ENCODE measurements at regions of chr1 and their contacts with region 1.

Region 1: DNA sequence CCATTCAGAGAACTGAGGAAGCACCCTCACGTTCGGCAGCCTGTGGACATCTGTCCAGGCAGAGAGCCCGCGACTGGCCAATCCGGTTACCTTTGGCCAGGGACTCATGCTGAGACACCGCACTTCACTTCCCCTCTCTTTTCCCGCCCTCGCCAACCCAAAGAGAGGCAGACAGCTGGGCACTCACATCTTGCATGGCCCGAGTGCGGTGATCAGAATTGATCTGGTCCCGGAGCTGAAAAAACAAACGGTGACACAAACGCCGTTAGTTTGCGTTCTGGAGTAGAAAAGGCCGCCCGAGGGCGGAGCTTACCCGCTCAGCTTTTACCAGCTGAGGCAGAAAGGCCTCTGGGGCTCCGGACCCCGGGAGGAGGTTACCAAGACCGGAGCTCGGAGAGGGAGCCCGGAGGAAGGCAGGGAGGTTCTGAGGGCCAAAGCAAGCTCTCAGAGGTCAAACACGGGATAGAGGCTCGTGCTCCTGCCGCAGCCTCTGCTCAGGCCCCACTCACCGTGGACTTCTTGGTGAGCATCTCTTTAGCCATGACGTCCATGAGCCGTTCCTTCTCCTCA is 376 bp downstream of the SF3A3 start:
- DNase-seq: peak in 2 of 9 donors; percentile 46 to 47
- ATAC-seq: peak; percentile 33
- H3K4me3 ChIP-seq: peak overlapping the region; percentile 97
- H3K4me3 Mint-ChIP-seq: peak overlapping the region; percentile 89 to 100 (median 99)
- H3K27ac ChIP-seq: peak overlapping the region; percentile 79
- H3K27ac Mint-ChIP-seq: peak overlapping the region; percentile 87 to 99 (median 91)
- H3K4me1 ChIP-seq: peaks cover 13 to 17% of the 10 kb centered on the region in 2 donors
- H3K4me1 Mint-ChIP-seq: peaks cover 16 to 30% (median 24%) of the 10 kb centered on the region in 7 donors
- H3K27me3 ChIP-seq: no peaks in the 10 kb centered on the region
- H3K27me3 Mint-ChIP-seq: no peaks in the 10 kb centered on the region

Region 2: GRCh38 chr1:37859507-37860345 is 129.7 kb before region 1 on chr1 and contains the start of gene MTF1:
- CTCF ChIA-PET with region 1: interaction called, 4 read pairs
- POLR2A ChIA-PET with region 1: no interaction called
- intact Hi-C with region 1: loop called (anchors 1 to 5 kb)
- DNase-seq: peak; percentile 85 to 98 (median 97)
- ATAC-seq: peak; percentile 99
- H3K4me3 ChIP-seq: peak within 1 kb of the TSS; percentile 94
- H3K4me3 Mint-ChIP-seq: peak within 1 kb of the TSS; percentile 89 to 100 (median 96)
- H3K27ac ChIP-seq: peak within 1 kb of the TSS; percentile 89
- H3K27ac Mint-ChIP-seq: peak within 1 kb of the TSS; percentile 90 to 99 (median 95)
- H3K4me1 ChIP-seq: peaks cover 12 to 19% of the 10 kb centered on the region in 2 donors
- H3K4me1 Mint-ChIP-seq: peaks cover 26 to 39% (median 33%) of the 10 kb centered on the region in 7 donors
- H3K27me3 ChIP-seq: no peaks in the 10 kb centered on the region
- H3K27me3 Mint-ChIP-seq: no peaks in the 10 kb centered on the region
- total RNA-seq, gene MTF1: 22.9 to 45.2 (median 27.1) TPM

Region 3: GRCh38 chr1:37931361-37932158 is 57.9 kb before region 1 on chr1:
- CTCF ChIA-PET with region 1: interaction called, 14 read pairs
- POLR2A ChIA-PET with region 1: interaction called, 4 read pairs
- intact Hi-C with region 1: loop called (anchors 1 kb)
- DNase-seq: peak; percentile 92 to 97 (median 96)
- ATAC-seq: peak; percentile 100
- H3K4me3 ChIP-seq: peak overlapping the region; percentile 67
- H3K4me3 Mint-ChIP-seq: peak overlapping the region; percentile 89 to 99 (median 98)
- H3K27ac ChIP-seq: peak overlapping the region; percentile 79
- H3K27ac Mint-ChIP-seq: peak overlapping the region; percentile 78 to 94 (median 87)
- H3K4me1 ChIP-seq: peaks cover 15 to 17% of the 10 kb centered on the region in 2 donors
- H3K4me1 Mint-ChIP-seq: peaks cover 22 to 52% (median 39%) of the 10 kb centered on the region in 7 donors
- H3K27me3 ChIP-seq: no peaks in the 10 kb centered on the region
- H3K27me3 Mint-ChIP-seq: peaks cover 0 to 3% (median 0%) of the 10 kb centered on the region in 5 donors

Region 4: DNA sequence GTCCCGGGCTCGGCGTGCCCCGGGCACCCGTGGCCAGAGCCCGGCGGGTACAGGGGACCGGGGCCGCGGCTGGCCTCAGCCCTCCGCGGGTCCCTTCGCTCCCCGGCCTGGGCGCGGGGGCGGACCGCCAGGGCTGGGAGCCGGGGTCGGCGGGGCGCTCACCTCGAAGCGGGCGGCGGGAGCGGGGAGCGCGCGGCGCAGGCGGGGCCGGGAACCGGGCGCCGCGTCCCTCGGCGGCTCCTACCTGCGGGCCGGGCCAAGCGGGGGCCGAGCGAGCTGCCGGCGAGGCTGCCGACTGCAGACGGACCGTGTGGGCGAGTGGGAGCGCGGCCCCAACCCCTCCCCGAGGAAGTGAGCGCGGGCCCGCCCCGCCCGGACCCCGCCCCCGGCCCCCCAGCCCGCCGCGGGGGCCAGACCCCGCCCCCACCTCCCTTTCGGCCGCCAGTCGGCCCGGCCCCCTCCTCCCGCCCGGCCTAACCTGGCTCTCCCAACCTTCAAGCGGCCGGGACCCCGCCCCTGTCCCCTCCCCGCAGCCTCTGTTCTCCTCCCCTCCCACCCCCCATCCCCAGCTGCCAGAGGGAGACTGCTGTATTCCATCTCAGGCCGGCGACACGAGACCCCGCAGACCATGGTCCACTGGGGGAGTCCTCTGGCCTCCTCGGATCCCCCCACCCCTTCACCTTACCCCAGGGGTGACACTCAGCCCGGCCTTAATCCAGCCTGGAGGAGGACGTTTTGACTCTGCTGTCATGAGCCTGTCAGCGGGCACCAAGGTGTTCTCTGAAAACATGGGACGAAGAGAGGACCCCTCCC is 16.0 kb after region 1 on chr1 and contains the start of gene FHL3:
- CTCF ChIA-PET with region 1: interaction called, 14 read pairs
- POLR2A ChIA-PET with region 1: interaction called, 24 read pairs
- intact Hi-C with region 1: loop called (anchors 1 to 2 kb)
- DNase-seq: peak in 4 of 9 donors; percentile 16 to 71 (median 28)
- ATAC-seq: peak; percentile 44
- H3K4me3 ChIP-seq: peak within 1 kb of the TSS; percentile 42
- H3K4me3 Mint-ChIP-seq: peak within 1 kb of the TSS; percentile 67 to 93 (median 83)
- H3K27ac ChIP-seq: peak within 1 kb of the TSS; percentile 51
- H3K27ac Mint-ChIP-seq: peak within 1 kb of the TSS; percentile 57 to 92 (median 73)
- H3K4me1 ChIP-seq: peaks cover 0 to 9% of the 10 kb centered on the region in 2 donors
- H3K4me1 Mint-ChIP-seq: peaks cover 21 to 50% (median 31%) of the 10 kb centered on the region in 7 donors
- H3K27me3 ChIP-seq: no peaks in the 10 kb centered on the region
- H3K27me3 Mint-ChIP-seq: no peaks in the 10 kb centered on the region
- total RNA-seq, gene FHL3: 2.9 to 19.0 (median 8.6) TPM

Region 5: GRCh38 chr1:38046884-38047602 is 57.6 kb after region 1 on chr1:
- CTCF ChIA-PET with region 1: no interaction called
- POLR2A ChIA-PET with region 1: no interaction called
- intact Hi-C with region 1: no loop called
- DNase-seq: peak; percentile 21 to 84 (median 44)
- ATAC-seq: peak; percentile 89
- H3K4me3 ChIP-seq: peak overlapping the region; percentile 50
- H3K4me3 Mint-ChIP-seq: peak overlapping the region; percentile 34 to 83 (median 72)
- H3K27ac ChIP-seq: no peak overlapping the region
- H3K27ac Mint-ChIP-seq: no peak overlapping the region
- H3K4me1 ChIP-seq: peaks cover 9 to 15% of the 10 kb centered on the region in 2 donors
- H3K4me1 Mint-ChIP-seq: peaks cover 3 to 16% (median 11%) of the 10 kb centered on the region in 7 donors
- H3K27me3 ChIP-seq: peaks cover 9 to 15% of the 10 kb centered on the region in 2 donors
- H3K27me3 Mint-ChIP-seq: peaks cover 27 to 52% (median 29%) of the 10 kb centered on the region in 5 donors

Region 6: DNA sequence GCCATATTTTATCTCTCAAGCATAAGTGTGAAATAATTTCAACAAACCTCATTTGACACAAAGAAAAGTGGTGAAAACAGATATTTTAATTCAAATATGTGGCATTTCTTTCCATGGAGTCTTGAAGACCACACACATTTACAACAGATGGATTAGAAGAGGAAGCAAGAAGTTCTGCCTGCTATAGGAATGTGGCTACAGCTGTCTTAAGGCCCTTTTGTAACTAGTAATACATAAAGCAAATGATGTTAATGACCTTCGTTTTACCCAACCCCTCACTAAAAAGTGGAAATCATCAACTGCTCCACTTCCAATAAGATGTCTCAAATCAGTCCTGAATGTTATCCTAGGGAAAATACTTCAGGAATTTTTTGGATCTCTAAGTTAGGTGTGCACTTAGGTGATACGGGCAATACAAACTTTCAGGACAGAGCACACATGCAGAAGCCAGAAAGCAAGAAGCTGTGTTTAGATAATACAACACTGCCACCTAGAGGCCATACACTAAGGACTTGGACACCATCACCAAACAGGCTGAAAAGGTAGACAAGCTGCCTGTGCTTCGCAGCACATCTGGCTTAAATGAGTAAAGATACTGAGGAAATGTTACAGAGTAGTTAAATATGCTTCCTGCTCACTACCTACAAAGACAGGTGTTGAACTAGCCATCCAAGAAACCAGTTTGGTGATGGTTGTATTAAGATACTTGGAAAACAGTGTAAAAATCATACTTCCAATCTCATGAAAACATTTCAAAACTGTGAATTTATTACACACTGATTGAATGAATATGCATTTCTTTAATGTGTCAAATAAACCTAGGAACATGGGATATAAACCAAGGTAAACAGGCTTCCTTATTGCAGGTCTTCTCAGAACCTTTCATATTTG is 845.7 kb after region 1 on chr1:
- CTCF ChIA-PET with region 1: no interaction called
- POLR2A ChIA-PET with region 1: no interaction called
- intact Hi-C with region 1: loop called in 1 of 2 experiments (anchors 1 kb)
- DNase-seq: peak in 7 of 9 donors; percentile 52 to 79 (median 71)
- ATAC-seq: peak; percentile 90
- H3K4me3 ChIP-seq: no peak overlapping the region
- H3K4me3 Mint-ChIP-seq: no peak overlapping the region
- H3K27ac ChIP-seq: no peak overlapping the region
- H3K27ac Mint-ChIP-seq: no peak overlapping the region
- H3K4me1 ChIP-seq: no peaks in the 10 kb centered on the region
- H3K4me1 Mint-ChIP-seq: peaks cover 0 to 6% (median under 1%) of the 10 kb centered on the region in 7 donors
- H3K27me3 ChIP-seq: peaks cover 0 to 9% of the 10 kb centered on the region in 2 donors
- H3K27me3 Mint-ChIP-seq: peaks cover 8 to 35% (median 12%) of the 10 kb centered on the region in 5 donors

Region 7: GRCh38 chr1:39081266-39082009 is 1092.0 kb after region 1 on chr1:
- CTCF ChIA-PET with region 1: no interaction called
- POLR2A ChIA-PET with region 1: no interaction called
- intact Hi-C with region 1: no loop called
- DNase-seq: peak in 4 of 9 donors; percentile 22 to 36 (median 30)
- ATAC-seq: peak; percentile 81
- H3K4me3 ChIP-seq: no peak overlapping the region
- H3K4me3 Mint-ChIP-seq: peak overlapping the region in 1 of 10 donors; percentile 81
- H3K27ac ChIP-seq: no peak overlapping the region
- H3K27ac Mint-ChIP-seq: no peak overlapping the region
- H3K4me1 ChIP-seq: no peaks in the 10 kb centered on the region
- H3K4me1 Mint-ChIP-seq: peaks cover 0 to 14% (median 11%) of the 10 kb centered on the region in 7 donors
- H3K27me3 ChIP-seq: peaks cover 0 to 10% of the 10 kb centered on the region in 2 donors
- H3K27me3 Mint-ChIP-seq: peaks cover 10 to 64% (median 40%) of the 10 kb centered on the region in 5 donors